Endothelial cell of umbilical vein (primary cell): ENCODE measurements at regions of chr10 and their contacts with region 1.

Region 1: GRCh38 chr10:22436884-22437619 is 91.8 kb downstream of the SPAG6 start:
- DNase-seq: peak; percentile 91
- H3K4me3 ChIP-seq: peak overlapping the region; percentile 66 to 74 (median 69)
- H3K27ac ChIP-seq: peak overlapping the region; percentile 94
- H3K4me1 ChIP-seq: peaks cover 27% of the 10 kb centered on the region
- H3K27me3 ChIP-seq: peaks cover 2 to 14% of the 10 kb centered on the region in 2 experiments
- CTCF ChIP-seq: peak; percentile 7 to 36
- POLR2A ChIP-seq: peak; percentile 93

Region 2: GRCh38 chr10:22228943-22229801 is 207.9 kb before region 1 on chr10:
- CTCF ChIA-PET with region 1: interaction called, 4 read pairs
- POLR2A ChIA-PET with region 1: no interaction called
- dilution Hi-C with region 1: no loop called
- intact Hi-C with region 1: loop called (anchors 1 kb)
- DNase-seq: peak; percentile 94
- H3K4me3 ChIP-seq: peak overlapping the region; percentile 69 to 97 (median 96)
- H3K27ac ChIP-seq: peak overlapping the region; percentile 49
- H3K4me1 ChIP-seq: peaks cover 9% of the 10 kb centered on the region
- H3K27me3 ChIP-seq: no peaks in the 10 kb centered on the region
- CTCF ChIP-seq: no peak
- POLR2A ChIP-seq: peak; percentile 30

Region 3: DNA sequence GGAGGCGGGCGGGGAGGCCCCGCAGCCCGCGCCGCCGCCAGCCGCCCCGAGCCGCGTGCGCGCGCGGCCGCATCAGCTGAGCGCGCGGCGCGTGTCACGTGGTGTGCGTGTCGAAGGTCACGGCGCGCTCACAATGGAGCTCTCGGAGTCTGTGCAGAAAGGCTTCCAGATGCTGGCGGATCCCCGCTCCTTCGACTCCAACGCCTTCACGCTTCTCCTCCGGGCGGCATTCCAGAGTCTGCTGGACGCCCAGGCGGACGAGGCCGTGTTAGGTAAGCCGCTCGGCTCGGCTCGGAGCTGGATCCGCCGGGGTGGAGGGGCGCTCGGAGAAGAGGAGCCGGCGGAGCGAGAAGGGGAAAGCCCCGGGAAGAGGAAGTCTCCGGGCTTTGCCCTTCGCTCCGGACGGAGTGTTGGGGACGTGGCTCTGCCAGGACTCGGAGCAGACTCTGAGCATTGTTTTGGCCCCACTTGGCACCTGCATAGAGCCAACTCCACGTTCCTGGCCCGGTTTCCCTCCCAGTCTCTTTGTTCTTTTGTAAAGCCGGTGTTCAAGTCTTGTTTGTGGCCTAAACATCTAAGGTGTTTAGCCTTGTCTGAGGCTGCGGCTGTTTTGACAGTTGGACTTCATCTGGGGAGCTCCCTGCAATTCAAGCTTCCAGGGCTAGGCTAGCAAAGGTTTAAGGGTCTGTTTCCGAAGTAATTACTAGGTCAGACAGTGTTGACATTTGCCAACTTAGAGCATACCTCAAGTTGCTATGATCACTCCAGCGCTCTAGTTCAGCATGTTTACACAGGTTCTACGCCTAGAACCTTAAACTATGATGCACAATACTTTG is 120.5 kb before region 1 on chr10 and contains the start of gene COMMD3:
- CTCF ChIA-PET with region 1: interaction called, 3 read pairs
- POLR2A ChIA-PET with region 1: interaction called, 4 read pairs
- dilution Hi-C with region 1: no loop called
- intact Hi-C with region 1: loop called (anchors 2 kb)
- DNase-seq: peak; percentile 88
- H3K4me3 ChIP-seq: peak within 1 kb of the TSS; percentile 67 to 93 (median 83)
- H3K27ac ChIP-seq: peak within 1 kb of the TSS; percentile 69
- H3K4me1 ChIP-seq: peaks cover 17% of the 10 kb centered on the region
- H3K27me3 ChIP-seq: no peaks in the 10 kb centered on the region
- CTCF ChIP-seq: no peak
- POLR2A ChIP-seq: peak; percentile 89
- total RNA-seq, gene COMMD3: 48.9 and 49.8 TPM in 2 replicates

Region 4: GRCh38 chr10:22464966-22465629 is 28.0 kb after region 1 on chr10:
- CTCF ChIA-PET with region 1: no interaction called
- POLR2A ChIA-PET with region 1: no interaction called
- dilution Hi-C with region 1: no loop called
- intact Hi-C with region 1: no loop called
- DNase-seq: no peak
- H3K4me3 ChIP-seq: no peak overlapping the region
- H3K27ac ChIP-seq: no peak overlapping the region
- H3K4me1 ChIP-seq: no peaks in the 10 kb centered on the region
- H3K27me3 ChIP-seq: peaks cover 21 to 25% of the 10 kb centered on the region in 2 experiments
- CTCF ChIP-seq: no peak
- POLR2A ChIP-seq: no peak

Region 5: DNA sequence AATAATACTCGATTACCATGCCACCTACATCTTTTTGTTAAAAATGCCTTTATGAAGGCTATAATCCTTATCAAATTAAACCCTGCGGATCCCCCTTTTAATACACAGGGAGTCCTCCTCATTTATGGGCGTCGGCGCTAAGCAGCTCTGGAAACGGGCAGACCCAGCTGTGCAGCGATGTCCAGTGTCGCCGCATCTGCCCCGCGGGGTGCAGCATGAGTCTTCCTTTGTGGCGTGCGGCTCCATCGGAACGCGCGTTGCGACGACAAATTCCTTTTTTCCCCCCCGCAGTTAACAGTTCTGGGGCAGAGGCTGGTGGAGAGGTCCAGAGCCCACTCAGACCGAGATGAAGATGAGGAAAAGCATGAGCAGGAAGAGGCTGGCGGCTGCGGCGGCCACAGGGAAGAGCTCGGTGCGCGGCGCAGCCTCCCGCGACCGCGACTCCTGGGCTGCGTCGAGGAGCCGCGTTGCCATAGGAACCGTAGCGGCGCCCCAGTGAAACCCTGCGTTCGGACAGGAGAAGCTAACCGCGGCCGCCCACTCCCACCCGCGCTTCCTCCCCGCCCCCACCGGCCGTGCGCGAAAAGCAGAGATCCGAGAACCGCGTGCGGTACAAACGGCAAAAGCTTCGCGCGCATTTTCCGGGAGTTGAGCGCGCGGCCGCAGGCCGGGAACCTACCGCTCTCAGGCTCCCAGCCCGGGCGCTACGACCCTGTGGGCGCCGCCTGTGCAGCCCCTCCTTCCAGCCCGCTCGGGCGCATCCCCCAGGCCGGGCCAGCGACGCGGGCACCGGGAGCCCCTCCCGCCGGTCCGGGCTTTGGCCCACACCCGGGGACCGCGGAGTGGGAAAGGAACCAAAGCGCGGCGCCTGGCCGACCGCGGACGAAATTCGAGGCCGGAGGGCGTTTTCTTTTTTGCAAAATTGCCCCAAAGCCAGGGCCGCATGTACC is 38.9 kb after region 1 on chr10:
- CTCF ChIA-PET with region 1: no interaction called
- POLR2A ChIA-PET with region 1: no interaction called
- dilution Hi-C with region 1: no loop called
- intact Hi-C with region 1: loop called (anchors 2 kb)
- DNase-seq: no peak
- H3K4me3 ChIP-seq: peak overlapping the region in 1 of 3 experiments; percentile 31
- H3K27ac ChIP-seq: no peak overlapping the region
- H3K4me1 ChIP-seq: peaks cover 8% of the 10 kb centered on the region
- H3K27me3 ChIP-seq: peaks cover 73 to 87% of the 10 kb centered on the region in 2 experiments
- CTCF ChIP-seq: no peak
- POLR2A ChIP-seq: no peak

Region 6: DNA sequence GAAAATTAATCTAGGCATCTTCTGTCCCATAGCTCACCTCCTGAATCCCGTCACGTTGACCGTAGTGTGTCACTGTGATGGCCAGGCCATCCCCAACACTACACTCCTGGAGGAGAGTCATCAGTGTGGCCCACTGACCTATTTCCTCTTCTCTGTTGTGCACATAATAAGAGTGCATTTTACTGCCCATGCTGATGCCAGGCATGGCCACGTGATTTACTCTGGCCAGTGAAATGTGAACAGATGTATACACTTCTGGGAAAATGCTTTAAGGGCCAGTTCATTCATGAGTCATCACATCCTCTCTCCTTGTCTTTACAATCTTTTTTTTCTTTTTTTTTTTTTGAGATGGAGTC is 379.2 kb after region 1 on chr10:
- CTCF ChIA-PET with region 1: no interaction called
- POLR2A ChIA-PET with region 1: no interaction called
- dilution Hi-C with region 1: no loop called
- intact Hi-C with region 1: loop called (anchors 5 kb)
- DNase-seq: peak; percentile 93
- H3K4me3 ChIP-seq: no peak overlapping the region
- H3K27ac ChIP-seq: peak overlapping the region; percentile 86
- H3K4me1 ChIP-seq: peaks cover 15% of the 10 kb centered on the region
- H3K27me3 ChIP-seq: no peaks in the 10 kb centered on the region
- CTCF ChIP-seq: no peak
- POLR2A ChIP-seq: no peak